Esophagus muscularis mucosa (tissue), 4 donors: ENCODE measurements at regions of chr5 and their contacts with region 1.

Region 1: DNA sequence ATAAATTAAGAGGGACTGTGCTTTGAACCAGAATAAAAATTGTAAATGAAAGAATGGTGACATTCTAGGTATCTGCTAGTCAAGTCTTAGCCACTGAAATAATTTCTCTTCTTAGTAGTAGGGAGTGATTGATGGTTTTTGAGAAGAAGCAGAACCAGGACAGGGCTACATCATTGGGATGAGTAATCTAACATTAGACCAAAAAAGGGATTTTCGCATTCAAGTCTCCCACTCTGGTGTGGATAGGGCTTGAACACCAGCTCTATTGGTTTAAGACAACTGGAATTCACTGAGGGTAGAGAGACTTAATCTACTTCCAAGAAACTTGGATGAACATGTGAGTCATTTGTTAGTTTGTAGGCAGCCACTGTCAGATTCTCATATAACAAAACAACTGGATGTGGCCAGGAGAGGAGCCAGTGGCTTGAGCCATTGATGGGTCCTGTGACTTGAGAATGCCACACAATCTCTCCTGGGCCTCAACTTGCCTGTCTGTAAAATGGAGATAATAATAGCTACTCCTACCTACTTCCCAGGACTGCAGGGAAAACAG is 16.6 kb downstream of the FAT2 start:
- DNase-seq: no peak
- H3K4me3 ChIP-seq: no peak overlapping the region
- H3K27ac ChIP-seq: no peak overlapping the region
- H3K4me1 ChIP-seq: no peaks in the 10 kb centered on the region
- H3K27me3 ChIP-seq: no peaks in the 10 kb centered on the region
- CTCF ChIP-seq: no peak
- EP300 ChIP-seq: no peak
- POLR2A ChIP-seq: no peak

Region 2: GRCh38 chr5:151627650-151628049 is 53.1 kb after region 1 on chr5:
- intact Hi-C with region 1: loop called (anchors 2 kb)
- DNase-seq: no peak
- H3K4me3 ChIP-seq: no peak overlapping the region
- H3K27ac ChIP-seq: no peak overlapping the region
- H3K4me1 ChIP-seq: peaks cover 0 to 9% (median 0%) of the 10 kb centered on the region in 4 donors
- H3K27me3 ChIP-seq: peaks cover 0 to 2% (median 0%) of the 10 kb centered on the region in 4 donors
- CTCF ChIP-seq: no peak
- EP300 ChIP-seq: no peak
- POLR2A ChIP-seq: no peak

Region 3: DNA sequence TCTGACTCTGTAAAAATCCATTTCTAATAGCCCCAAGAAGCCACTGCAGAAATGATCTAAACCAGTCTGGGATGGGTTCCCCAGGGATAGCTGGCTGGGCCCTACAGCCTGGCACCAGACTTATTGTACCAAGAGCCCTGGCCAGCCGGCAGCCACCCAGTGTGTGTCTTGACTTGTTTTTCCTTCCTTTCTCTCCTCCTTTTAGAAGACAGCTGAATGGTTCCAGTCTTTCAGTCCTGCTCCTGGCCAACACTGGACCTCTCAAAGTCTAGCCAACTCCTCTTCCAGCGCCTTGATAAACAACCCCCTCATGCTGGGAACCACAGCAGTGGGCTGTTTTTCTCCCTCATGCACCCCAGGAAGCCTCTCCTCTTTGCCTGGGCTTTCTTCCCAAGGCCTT is 149.8 kb after region 1 on chr5:
- intact Hi-C with region 1: no loop called
- DNase-seq: no peak
- H3K4me3 ChIP-seq: no peak overlapping the region
- H3K27ac ChIP-seq: no peak overlapping the region
- H3K4me1 ChIP-seq: peaks cover 0 to 29% (median 22%) of the 10 kb centered on the region in 4 donors
- H3K27me3 ChIP-seq: no peaks in the 10 kb centered on the region
- CTCF ChIP-seq: no peak
- EP300 ChIP-seq: no peak
- POLR2A ChIP-seq: no peak

Region 4: DNA sequence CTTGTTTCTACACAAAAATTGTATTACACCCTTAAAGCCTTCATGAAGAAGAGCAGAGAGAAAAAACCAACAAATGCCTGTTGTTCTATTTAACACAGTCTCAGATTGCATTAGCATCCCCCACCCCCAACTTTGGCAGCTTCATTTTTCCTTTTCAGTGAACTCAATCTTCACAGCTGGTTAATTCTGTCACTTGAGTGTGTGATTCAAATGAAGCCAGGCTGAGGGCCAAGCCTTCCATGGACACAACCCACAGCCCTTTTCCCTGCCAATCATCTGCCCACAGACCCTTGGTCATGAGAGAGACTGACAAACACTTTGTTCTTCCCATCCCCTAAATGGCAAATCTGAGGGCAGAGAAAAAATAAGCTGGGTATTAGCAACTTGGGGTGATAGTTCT is 1048.1 kb after region 1 on chr5:
- intact Hi-C with region 1: no loop called
- DNase-seq: no peak
- H3K4me3 ChIP-seq: no peak overlapping the region
- H3K27ac ChIP-seq: no peak overlapping the region
- H3K4me1 ChIP-seq: no peaks in the 10 kb centered on the region
- H3K27me3 ChIP-seq: no peaks in the 10 kb centered on the region
- CTCF ChIP-seq: no peak
- EP300 ChIP-seq: no peak
- POLR2A ChIP-seq: no peak